ENCODE measurements at regions of chr19 and their contacts with region 1.

Region 1: GRCh38 chr19:42254989-42255765 is at the start of gene ERF:
- H3K4me3 ChIP-seq: peak within 1 kb of the TSS; percentile 83
- H3K27ac ChIP-seq: peak within 1 kb of the TSS; percentile 99
- H3K4me1 ChIP-seq: peaks cover 34% of the 10 kb centered on the region
- CTCF ChIP-seq: no peak

Region 2: DNA sequence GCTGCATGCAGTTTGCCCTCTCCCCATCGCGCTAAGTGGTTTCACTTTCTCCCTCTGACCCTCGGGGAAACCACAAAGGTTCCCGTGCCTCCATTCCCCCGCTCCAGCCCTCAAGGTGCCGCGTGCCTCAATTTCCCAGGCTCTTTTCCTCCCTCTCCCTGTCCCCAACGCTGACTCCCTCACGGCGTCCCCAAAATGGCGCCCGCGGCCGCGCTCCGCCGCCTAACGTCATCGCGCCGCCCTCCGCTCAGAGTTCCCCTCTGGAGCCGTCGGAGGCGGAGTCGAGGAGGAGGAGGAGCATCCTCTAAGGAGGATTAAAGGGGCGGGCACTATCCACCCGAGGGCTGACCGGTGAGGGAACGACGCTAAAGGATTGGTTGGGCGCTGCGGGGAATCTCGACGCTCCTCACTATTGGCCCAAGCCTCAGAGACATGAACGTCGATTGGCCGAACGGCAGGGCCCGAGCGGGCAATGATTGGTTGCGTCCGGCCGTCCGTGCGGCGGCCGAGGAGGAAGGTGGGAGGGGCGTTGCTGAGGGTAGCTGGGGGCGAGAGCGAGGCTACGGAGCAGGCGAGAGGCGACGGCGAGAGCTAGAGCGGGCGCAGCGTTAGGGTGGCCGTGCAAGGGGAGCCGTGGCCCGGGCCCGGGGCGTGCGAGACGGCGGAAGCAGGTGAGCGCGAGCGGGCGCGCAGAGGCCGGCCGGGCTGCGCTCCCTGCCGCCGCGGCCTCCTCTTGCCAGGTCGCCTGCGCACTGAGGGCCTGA is 179.4 kb before region 1 on chr19 and contains the start of gene ZNF574:
- CTCF ChIA-PET with region 1: no interaction called
- POLR2A ChIA-PET with region 1: no interaction called
- H3K4me3 ChIP-seq: peak within 1 kb of the TSS; percentile 75
- H3K27ac ChIP-seq: peak within 1 kb of the TSS; percentile 98
- H3K4me1 ChIP-seq: peaks cover 11% of the 10 kb centered on the region
- CTCF ChIP-seq: no peak; the same call in 1 of the 2 replicates

Region 3: DNA sequence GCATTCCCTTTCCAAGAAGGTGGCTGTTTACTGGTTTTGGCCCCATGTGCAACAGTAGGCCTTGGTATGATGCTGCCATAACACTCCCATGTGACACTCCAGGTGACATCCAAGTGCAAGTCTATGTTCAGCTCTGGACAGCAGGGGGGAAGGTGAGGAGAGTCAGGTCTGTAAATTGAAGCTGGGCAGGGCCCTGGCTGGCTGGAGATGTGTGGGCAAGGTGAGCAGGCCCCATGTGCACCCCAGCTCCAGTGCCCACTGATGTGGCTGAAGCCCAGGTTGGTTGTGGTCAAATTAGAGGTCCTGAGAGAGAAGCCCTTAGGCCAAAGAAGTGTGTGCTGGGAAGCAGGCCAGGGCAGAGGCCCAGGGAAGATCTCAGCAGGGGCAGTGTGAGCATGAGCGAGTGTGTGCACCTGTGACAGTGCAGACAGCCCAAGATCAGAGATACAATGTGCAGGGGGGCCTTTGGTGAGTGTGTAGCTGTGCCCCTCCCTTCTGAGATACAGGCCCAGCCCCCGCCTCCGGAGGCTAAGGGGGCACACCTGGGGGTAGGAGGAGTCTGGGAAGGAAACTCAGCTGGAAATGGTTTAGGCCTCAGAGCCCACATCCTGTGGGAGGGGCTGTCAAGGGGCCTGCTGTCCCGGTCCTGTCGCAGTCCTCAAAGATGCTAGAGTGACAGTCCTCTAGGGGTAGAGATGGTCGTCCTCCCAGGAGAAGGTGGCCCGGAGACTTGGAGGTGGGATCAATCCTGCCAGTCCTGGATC is 56.3 kb before region 1 on chr19:
- CTCF ChIA-PET with region 1: no interaction called
- POLR2A ChIA-PET with region 1: no interaction called
- H3K4me3 ChIP-seq: no peak overlapping the region
- H3K27ac ChIP-seq: no peak overlapping the region
- H3K4me1 ChIP-seq: no peaks in the 10 kb centered on the region
- CTCF ChIP-seq: no peak

Region 4: DNA sequence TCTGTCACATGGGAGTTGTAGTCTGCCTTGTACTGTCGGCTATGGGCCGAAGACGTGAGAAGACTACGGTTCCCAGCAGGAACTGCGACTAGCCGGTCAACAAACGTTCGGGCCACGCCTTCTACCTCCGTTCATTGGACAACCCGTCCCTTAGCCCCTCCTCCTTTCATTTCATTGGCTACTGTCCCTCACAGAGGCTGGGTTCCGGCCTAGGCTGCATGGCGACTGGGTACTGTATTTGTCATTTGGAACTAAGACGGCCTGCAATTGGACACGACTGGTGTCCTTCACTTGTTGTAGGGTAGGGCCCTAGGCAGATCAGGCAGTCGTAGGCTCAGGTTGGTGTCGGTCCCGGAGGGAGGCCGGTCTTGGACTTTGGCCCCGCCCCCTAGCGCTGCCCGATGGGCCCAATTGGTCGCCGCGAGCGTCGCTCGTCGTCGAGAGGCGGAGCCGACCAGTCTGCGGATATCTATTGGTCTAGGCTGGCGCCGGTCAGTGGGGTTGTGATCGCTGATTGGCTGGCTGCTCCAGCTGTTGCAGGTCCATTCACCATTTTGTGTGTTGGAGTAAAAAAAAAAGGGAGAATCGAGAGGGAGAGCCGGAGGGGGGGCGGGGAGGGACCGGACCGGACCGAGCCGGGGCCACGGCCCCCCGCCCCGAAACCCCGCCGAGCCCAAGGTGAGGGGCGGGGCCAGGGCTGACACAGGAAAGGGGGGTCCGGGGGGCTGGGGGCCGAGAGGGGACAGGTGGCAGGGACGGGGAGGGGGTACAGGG is 13.7 kb after region 1 on chr19 and contains the start of gene CIC:
- CTCF ChIA-PET with region 1: interaction called, 3 read pairs
- POLR2A ChIA-PET with region 1: interaction called, 242 read pairs
- H3K4me3 ChIP-seq: peak within 1 kb of the TSS; percentile 77
- H3K27ac ChIP-seq: peak within 1 kb of the TSS; percentile 98
- H3K4me1 ChIP-seq: peaks cover 16% of the 10 kb centered on the region
- CTCF ChIP-seq: no peak